Activated CD4-positive, alpha-beta memory T cell treated with anti-CD3 and anti-CD28 coated beads for 36 hours (primary cell): ENCODE measurements at regions of chr19 and their contacts with region 1.

Region 1: DNA sequence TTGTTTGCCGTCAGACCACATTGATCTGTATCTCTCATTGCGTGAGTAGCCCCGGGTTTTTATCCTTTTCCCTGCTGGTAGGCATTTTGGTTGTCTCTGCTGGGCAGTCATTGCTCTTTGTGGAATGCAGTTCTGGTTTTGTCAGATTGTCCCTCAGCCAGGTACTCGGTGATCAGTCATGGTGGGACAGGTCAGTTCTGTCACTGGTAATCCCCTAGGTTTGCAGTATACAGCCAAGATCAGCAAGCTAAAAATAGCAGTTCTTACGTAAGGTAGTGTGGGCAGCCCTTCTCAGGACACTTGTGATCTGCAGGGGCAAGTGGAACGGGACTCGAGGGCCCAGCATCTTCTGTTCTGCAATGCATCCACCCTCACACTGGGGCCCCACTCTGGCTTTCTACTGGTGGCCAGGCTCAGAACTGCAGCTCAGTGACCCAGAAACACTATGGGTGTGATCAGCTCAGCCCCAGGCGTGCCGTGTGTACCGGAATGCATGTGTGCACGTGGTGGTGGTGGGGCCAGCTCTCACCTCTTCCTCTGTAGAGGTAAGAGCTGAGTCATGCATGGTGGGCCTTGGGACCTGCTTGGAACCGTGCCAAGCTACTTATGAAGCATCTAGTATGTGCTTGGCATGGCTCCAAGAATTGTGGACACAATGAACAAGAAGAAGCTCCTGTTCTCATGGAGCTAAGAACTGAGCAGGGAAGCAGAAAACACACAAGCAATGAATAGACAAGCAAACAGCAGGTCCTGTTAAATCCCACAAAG is 6.3 kb downstream of the PLEKHF1 start:
- DNase-seq: peak; percentile 95
- H3K4me3 Mint-ChIP-seq: peak overlapping the region; percentile 66
- H3K27ac Mint-ChIP-seq: peak overlapping the region; percentile 99
- H3K4me1 Mint-ChIP-seq: peaks cover 89% of the 10 kb centered on the region
- H3K27me3 Mint-ChIP-seq: no peaks in the 10 kb centered on the region

Region 2: GRCh38 chr19:29622138-29623070 is 49.2 kb before region 1 on chr19:
- CTCF ChIA-PET with region 1: interaction called, 20 read pairs
- POLR2A ChIA-PET with region 1: interaction called, 5 read pairs
- intact Hi-C with region 1: loop called (anchors 2 kb)
- DNase-seq: peak; percentile 32
- H3K4me3 Mint-ChIP-seq: no peak overlapping the region
- H3K27ac Mint-ChIP-seq: no peak overlapping the region
- H3K4me1 Mint-ChIP-seq: peaks cover 43% of the 10 kb centered on the region
- H3K27me3 Mint-ChIP-seq: no peaks in the 10 kb centered on the region

Region 3: GRCh38 chr19:29694669-29695627 is 23.4 kb after region 1 on chr19:
- CTCF ChIA-PET with region 1: interaction called, 30 read pairs
- POLR2A ChIA-PET with region 1: interaction called, 6 read pairs
- intact Hi-C with region 1: loop called (anchors 1 kb)
- DNase-seq: peak; percentile 87
- H3K4me3 Mint-ChIP-seq: no peak overlapping the region
- H3K27ac Mint-ChIP-seq: no peak overlapping the region
- H3K4me1 Mint-ChIP-seq: peaks cover 11% of the 10 kb centered on the region
- H3K27me3 Mint-ChIP-seq: no peaks in the 10 kb centered on the region

Region 4: GRCh38 chr19:29941828-29942403 is 270.3 kb after region 1 on chr19 and contains the start of gene URI1:
- CTCF ChIA-PET with region 1: no interaction called
- POLR2A ChIA-PET with region 1: no interaction called
- intact Hi-C with region 1: loop called (anchors 2 kb)
- DNase-seq: peak; percentile 95
- H3K4me3 Mint-ChIP-seq: peak within 1 kb of the TSS; percentile 98
- H3K27ac Mint-ChIP-seq: peak within 1 kb of the TSS; percentile 94
- H3K4me1 Mint-ChIP-seq: peaks cover 36% of the 10 kb centered on the region
- H3K27me3 Mint-ChIP-seq: no peaks in the 10 kb centered on the region
- total RNA-seq, gene URI1: 66.9 to 68.5 TPM